SK-N-SH (cell line): ENCODE measurements at regions of chr10 and their contacts with region 1.

Region 1: GRCh38 chr10:97792141-97792721 is 20.4 kb upstream of the SFRP5 start:
- DNase-seq: peak; percentile 84
- H3K4me3 ChIP-seq: peak overlapping the region in 1 of 2 experiments; percentile 3; a peak in 1 of 4 replicates
- H3K27ac ChIP-seq: no peak overlapping the region
- H3K4me1 ChIP-seq: peaks cover 0 to 29% of the 10 kb centered on the region in 2 experiments; a peak in 1 of 4 replicates
- H3K27me3 ChIP-seq: no peaks in the 10 kb centered on the region
- CTCF ChIP-seq: peak; percentile 91
- EP300 ChIP-seq: no peak
- RAD21 ChIP-seq: peak; percentile 82

Region 2: GRCh38 chr10:97648562-97649404 is 143.4 kb before region 1 on chr10:
- CTCF ChIA-PET with region 1: no interaction called
- POLR2A ChIA-PET with region 1: no interaction called
- DNase-seq: no peak
- H3K4me3 ChIP-seq: no peak overlapping the region
- H3K27ac ChIP-seq: peak overlapping the region; percentile 81 to 95
- H3K4me1 ChIP-seq: peaks cover 4 to 22% of the 10 kb centered on the region in 2 experiments; a peak in 3 of 4 replicates
- H3K27me3 ChIP-seq: no peaks in the 10 kb centered on the region
- CTCF ChIP-seq: no peak
- EP300 ChIP-seq: peak in 1 of 2 experiments; percentile 68; a peak in 1 of 4 replicates
- RAD21 ChIP-seq: no peak

Region 3: DNA sequence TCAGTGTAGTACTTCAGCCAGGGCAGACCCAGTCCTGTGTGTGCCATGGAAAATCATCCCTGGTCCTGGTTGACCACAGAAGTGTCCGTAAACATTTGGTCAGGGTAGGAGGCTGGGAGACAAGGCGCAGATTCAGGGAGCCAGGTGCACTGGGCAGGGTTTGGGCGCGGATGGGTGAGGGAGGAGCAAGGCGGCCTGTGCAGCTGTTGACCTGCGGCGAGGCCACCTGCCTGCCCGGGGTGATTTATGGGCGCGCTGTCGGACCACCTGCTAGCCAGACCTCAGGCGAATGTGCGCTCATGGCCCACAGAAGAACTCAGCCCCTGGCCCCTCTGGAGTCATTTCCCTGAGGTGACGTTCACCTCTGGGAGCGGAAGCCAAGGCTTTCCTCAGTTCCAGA is 27.0 kb before region 1 on chr10:
- CTCF ChIA-PET with region 1: interaction called, 43 read pairs
- POLR2A ChIA-PET with region 1: no interaction called
- DNase-seq: no peak
- H3K4me3 ChIP-seq: no peak overlapping the region
- H3K27ac ChIP-seq: no peak overlapping the region
- H3K4me1 ChIP-seq: no peaks in the 10 kb centered on the region; a peak in 1 of 4 replicates
- H3K27me3 ChIP-seq: no peaks in the 10 kb centered on the region; the same call in 1 of the 2 replicates
- CTCF ChIP-seq: no peak
- EP300 ChIP-seq: no peak
- RAD21 ChIP-seq: no peak

Region 4: GRCh38 chr10:97805096-97805884 is 13.1 kb after region 1 on chr10:
- CTCF ChIA-PET with region 1: interaction called, 31 read pairs
- POLR2A ChIA-PET with region 1: no interaction called
- DNase-seq: no peak
- H3K4me3 ChIP-seq: no peak overlapping the region
- H3K27ac ChIP-seq: no peak overlapping the region
- H3K4me1 ChIP-seq: no peaks in the 10 kb centered on the region
- H3K27me3 ChIP-seq: peaks cover 13% of the 10 kb centered on the region; the same call in 1 of the 2 replicates
- CTCF ChIP-seq: no peak
- EP300 ChIP-seq: no peak
- RAD21 ChIP-seq: no peak

Region 5: DNA sequence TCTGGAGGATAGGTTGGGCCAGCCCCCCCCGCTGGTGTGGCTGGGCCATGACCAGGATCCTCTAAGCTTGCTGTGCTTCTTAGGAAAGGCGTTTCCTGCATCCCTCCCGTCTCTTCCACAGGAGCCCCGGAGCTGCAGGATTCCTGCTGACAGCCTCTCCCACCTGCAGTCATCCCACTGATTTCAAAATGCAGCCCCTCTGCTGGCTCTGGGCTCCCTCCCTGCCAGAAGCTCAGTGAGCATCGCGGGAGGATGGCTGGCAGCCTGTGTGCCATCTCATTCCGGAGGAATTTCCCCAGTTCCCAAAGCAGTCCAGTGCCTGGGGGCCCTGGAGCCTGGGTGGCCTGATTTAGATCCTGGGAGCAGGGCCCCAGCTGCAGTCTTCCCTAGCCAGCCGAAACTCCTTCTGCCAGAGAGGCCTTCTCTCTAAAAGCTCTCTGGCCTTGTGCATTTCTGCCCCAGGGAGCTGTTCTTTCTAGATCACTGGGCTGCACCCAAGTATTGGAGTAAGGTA is 35.6 kb after region 1 on chr10:
- CTCF ChIA-PET with region 1: interaction called, 50 read pairs
- POLR2A ChIA-PET with region 1: no interaction called
- DNase-seq: peak; percentile 67
- H3K4me3 ChIP-seq: no peak overlapping the region
- H3K27ac ChIP-seq: no peak overlapping the region
- H3K4me1 ChIP-seq: peaks cover 11 to 14% of the 10 kb centered on the region in 2 experiments; a peak in 2 of 4 replicates
- H3K27me3 ChIP-seq: no peaks in the 10 kb centered on the region; the same call in 1 of the 2 replicates
- CTCF ChIP-seq: no peak
- EP300 ChIP-seq: no peak
- RAD21 ChIP-seq: no peak

Region 6: DNA sequence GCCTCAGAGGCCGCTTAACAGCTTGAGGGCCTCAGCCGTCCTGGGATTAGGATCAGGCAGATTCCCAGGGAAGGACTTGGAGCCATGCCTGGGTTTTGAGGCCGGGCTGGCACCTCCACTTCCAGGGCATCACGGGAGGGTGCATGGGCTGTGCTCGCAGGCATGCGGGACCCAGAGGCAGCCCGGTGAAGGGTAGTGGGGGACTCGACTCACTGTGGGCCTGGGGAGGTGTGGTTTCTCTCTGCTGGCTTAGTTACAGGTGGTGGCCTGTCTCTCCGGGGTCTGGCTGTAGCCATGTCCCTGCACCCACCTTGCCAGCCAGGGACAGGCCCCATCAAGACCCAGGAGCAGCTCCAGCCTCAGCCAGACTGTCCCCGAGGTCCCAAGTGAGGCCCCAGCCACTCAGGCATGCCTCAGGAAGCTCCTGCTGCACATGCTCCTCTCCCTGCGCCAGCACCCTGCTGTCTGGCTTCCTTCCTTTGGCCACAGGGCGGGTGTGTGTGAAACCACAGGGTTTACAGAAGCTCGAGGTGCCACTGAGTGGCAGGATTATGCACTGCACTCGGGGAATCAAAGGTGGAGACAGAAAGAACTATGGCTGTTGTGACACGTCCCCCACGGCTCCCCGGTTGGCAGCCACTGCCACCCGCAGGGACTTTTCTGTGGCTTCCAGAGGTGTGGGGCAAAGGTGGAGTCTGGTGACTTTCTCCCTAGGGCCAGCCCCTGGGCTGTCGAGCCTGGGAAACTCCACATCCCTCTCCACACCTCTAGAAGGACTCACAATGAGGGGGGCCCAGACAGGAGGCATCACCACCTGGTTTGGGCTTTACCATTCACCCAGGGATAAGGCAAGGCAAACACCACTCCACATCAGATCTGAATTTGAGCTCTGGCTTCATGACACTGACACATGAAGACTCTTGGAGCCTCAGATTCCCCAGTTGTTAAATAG is 77.1 kb after region 1 on chr10:
- CTCF ChIA-PET with region 1: interaction called, 277 read pairs
- POLR2A ChIA-PET with region 1: interaction called, 4 read pairs
- DNase-seq: peak; percentile 93
- H3K4me3 ChIP-seq: no peak overlapping the region
- H3K27ac ChIP-seq: peak overlapping the region in 1 of 2 experiments; percentile 80; a peak in 2 of 4 replicates
- H3K4me1 ChIP-seq: peaks cover 0 to 15% of the 10 kb centered on the region in 2 experiments; a peak in 2 of 4 replicates
- H3K27me3 ChIP-seq: peaks cover 18% of the 10 kb centered on the region; the same call in 1 of the 2 replicates
- CTCF ChIP-seq: peak; percentile 72
- EP300 ChIP-seq: no peak
- RAD21 ChIP-seq: peak; percentile 98

Region 7: DNA sequence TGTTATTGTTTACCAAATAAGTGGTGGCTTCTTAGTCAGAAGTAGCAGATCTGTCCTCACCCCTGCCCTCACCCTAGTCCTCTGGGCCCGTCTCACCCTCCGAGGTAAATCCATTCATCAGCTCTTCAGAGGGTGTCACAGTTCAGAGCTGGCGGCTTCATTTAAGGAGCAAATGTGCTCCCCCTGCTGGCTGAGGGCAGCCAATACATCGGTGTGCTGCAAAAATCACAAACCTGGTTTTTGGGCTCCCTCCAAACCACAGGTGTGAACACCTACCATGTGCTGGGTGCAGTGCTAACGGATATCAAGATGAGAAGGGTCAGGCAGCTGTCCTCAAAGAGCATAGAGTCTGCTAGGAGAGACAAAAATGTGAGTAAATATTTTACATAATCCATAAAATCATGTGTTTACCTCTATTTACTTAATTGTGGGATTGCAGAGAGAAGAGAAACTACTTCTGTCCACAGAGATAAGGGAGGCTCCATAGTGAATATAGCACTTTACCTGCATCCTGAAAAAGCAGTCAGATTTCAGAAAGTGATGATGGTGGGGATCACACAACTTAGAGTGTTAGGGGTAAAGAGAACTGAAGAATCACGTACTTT is 253.7 kb after region 1 on chr10:
- CTCF ChIA-PET with region 1: interaction called, 13 read pairs
- POLR2A ChIA-PET with region 1: no interaction called
- DNase-seq: peak; percentile 72
- H3K4me3 ChIP-seq: no peak overlapping the region; a peak in 1 of 4 replicates
- H3K27ac ChIP-seq: no peak overlapping the region
- H3K4me1 ChIP-seq: peaks cover 0 to 2% of the 10 kb centered on the region in 2 experiments; a peak in 1 of 4 replicates
- H3K27me3 ChIP-seq: peaks cover 5% of the 10 kb centered on the region; the same call in 1 of the 2 replicates
- CTCF ChIP-seq: peak; percentile 91
- EP300 ChIP-seq: no peak
- RAD21 ChIP-seq: peak; percentile 66